ENCODE measurements at regions of chrX and their contacts with region 1.

Region 1: GRCh38 chrX:17689971-17690409 is 47.3 kb upstream of the SCML1 start:
- DNase-seq: peak; percentile 35
- ATAC-seq: peak; percentile 81
- H3K4me3 ChIP-seq: no peak overlapping the region
- H3K27ac ChIP-seq: no peak overlapping the region
- H3K4me1 ChIP-seq: no peaks in the 10 kb centered on the region
- H3K27me3 ChIP-seq: no peaks in the 10 kb centered on the region
- CTCF ChIP-seq: peak; percentile 66
- EP300 ChIP-seq: no peak
- POLR2A ChIP-seq: no peak
- RAD21 ChIP-seq: no peak

Region 2: DNA sequence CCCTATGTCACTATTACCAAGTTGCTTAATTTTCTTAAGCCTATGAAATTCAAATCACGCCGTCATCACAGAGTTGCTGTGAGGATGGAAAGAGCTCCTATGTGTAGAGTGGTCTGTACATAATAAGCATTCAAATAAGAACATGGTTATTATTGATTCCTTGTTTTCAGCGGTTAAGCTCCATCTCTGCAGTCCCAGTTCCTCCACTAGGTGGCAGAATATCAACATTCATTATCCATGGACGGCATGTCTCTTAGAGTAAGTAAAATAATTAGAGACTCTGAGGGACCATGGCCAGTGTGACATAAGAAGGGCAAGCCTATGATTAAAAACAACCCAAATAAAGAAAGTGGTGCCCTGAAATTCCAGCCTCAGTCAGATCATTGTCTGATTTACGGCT is 447.5 kb before region 1 on chrX:
- CTCF ChIA-PET with region 1: interaction called, 9 read pairs
- POLR2A ChIA-PET with region 1: no interaction called
- in situ Hi-C with region 1: loop called (anchors 25 kb)
- intact Hi-C with region 1: no loop called
- DNase-seq: peak; percentile 10
- ATAC-seq: peak; percentile 50; the same call in 2 of the 3 replicates
- H3K4me3 ChIP-seq: no peak overlapping the region
- H3K27ac ChIP-seq: no peak overlapping the region
- H3K4me1 ChIP-seq: no peaks in the 10 kb centered on the region
- H3K27me3 ChIP-seq: no peaks in the 10 kb centered on the region
- CTCF ChIP-seq: peak; percentile 67
- EP300 ChIP-seq: no peak
- POLR2A ChIP-seq: no peak
- RAD21 ChIP-seq: no peak

Region 3: GRCh38 chrX:17535229-17535628 is 154.8 kb before region 1 on chrX:
- CTCF ChIA-PET with region 1: interaction called, 3 read pairs
- POLR2A ChIA-PET with region 1: no interaction called
- in situ Hi-C with region 1: loop called (anchors 5 kb)
- intact Hi-C with region 1: no loop called
- DNase-seq: peak; percentile 18
- ATAC-seq: peak; percentile 59
- H3K4me3 ChIP-seq: no peak overlapping the region
- H3K27ac ChIP-seq: no peak overlapping the region
- H3K4me1 ChIP-seq: no peaks in the 10 kb centered on the region
- H3K27me3 ChIP-seq: no peaks in the 10 kb centered on the region
- CTCF ChIP-seq: peak; percentile 50
- EP300 ChIP-seq: no peak
- POLR2A ChIP-seq: no peak
- RAD21 ChIP-seq: no peak

Region 4: GRCh38 chrX:18210470-18210869 is 520.5 kb after region 1 on chrX:
- CTCF ChIA-PET with region 1: no interaction called
- POLR2A ChIA-PET with region 1: no interaction called
- in situ Hi-C with region 1: no loop called
- intact Hi-C with region 1: loop called (anchors 10 kb)
- DNase-seq: no peak
- ATAC-seq: no peak
- H3K4me3 ChIP-seq: no peak overlapping the region
- H3K27ac ChIP-seq: no peak overlapping the region
- H3K4me1 ChIP-seq: no peaks in the 10 kb centered on the region
- H3K27me3 ChIP-seq: no peaks in the 10 kb centered on the region
- CTCF ChIP-seq: no peak
- EP300 ChIP-seq: no peak
- POLR2A ChIP-seq: no peak
- RAD21 ChIP-seq: no peak

Measured in HepG2 (cell line).